ENCODE measurements at regions of chr1 and their contacts with region 1.

Region 1: GRCh38 chr1:113928941-113929749 is at the start of gene HIPK1:
- DNase-seq: peak; percentile 96

Region 2: GRCh38 chr1:113811888-113812660 is 117.1 kb before region 1 on chr1 and contains the start of gene RSBN1:
- CTCF ChIA-PET with region 1: no interaction called
- POLR2A ChIA-PET with region 1: interaction called, 17 read pairs
- DNase-seq: peak; percentile 96

Region 3: DNA sequence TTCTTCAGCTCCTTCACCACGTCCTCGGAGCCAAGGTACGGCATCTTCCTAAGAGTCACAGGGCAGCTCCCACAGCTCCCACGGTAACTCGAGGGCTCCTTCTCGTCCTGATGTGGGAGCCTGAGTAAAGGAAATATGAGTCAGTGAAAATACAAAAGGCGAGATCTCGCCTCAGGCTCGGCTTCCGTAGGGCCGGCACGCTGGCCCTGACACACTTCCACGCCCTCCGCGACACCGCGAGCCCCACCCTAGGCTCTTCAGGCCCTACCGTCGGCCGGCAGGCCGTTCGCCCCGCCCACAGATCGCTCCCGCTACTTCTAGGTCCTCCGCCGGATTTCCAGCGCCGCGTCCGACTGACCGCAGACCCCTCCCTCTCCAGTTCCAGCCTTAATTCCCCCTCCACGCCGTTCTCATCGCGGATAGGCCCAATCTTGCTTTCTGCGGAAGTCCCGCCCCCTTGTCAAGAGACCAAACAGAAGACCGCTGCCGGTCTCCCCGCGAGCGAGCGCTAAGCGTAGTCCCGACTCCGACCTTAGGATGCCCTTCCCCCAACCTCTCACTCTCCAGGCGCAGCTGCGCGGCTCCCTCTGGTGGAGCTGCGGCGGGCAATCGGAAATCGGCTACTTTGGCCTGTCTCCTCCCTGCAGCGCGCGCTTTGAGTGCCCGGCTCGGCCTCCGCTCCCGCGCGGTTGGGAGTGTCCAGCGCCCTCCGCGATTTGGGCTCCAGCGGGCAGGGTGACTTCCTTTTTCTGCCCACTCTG is 24.3 kb before region 1 on chr1 and contains the starts of genes AP4B1 and DCLRE1B:
- CTCF ChIA-PET with region 1: interaction called, 4 read pairs
- POLR2A ChIA-PET with region 1: interaction called, 116 read pairs
- DNase-seq: peak; percentile 100

Region 4: DNA sequence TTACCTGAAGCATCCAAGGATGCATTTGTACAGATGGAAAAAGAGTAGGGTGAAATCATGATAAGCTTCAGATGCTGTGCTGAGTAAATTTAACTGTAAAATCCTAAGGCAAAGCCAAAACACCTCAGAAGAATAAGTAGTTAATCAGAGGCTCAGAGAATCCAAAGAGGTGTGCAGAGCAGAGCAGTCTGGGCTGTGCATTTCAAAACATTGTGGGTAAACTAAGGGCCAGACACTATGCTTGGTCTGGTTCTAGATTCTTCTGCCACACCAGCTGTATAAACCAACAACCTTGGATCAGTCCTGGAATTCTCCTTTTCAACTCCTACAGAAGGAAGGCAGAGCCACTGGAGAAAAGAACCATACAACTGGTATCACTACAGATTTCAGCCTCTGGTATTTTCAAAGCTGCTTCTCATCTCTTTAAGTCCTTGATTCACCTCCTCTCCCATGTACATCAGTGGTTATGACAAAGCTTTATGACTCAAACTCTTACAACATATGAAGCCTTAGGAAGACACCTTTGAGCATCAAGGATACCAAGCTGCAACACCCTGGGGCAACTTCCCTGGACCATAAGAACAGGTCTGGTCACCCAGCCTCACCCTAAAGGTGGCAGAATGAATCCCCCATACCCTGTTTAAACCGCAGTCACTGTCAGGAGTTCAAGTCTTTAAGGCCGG is 11.6 kb before region 1 on chr1:
- CTCF ChIA-PET with region 1: interaction called, 3 read pairs
- POLR2A ChIA-PET with region 1: interaction called, 15 read pairs
- DNase-seq: no peak

Region 5: GRCh38 chr1:113946678-113947387 is 17.7 kb after region 1 on chr1:
- CTCF ChIA-PET with region 1: interaction called, 6 read pairs
- POLR2A ChIA-PET with region 1: interaction called, 12 read pairs
- DNase-seq: no peak

Region 6: DNA sequence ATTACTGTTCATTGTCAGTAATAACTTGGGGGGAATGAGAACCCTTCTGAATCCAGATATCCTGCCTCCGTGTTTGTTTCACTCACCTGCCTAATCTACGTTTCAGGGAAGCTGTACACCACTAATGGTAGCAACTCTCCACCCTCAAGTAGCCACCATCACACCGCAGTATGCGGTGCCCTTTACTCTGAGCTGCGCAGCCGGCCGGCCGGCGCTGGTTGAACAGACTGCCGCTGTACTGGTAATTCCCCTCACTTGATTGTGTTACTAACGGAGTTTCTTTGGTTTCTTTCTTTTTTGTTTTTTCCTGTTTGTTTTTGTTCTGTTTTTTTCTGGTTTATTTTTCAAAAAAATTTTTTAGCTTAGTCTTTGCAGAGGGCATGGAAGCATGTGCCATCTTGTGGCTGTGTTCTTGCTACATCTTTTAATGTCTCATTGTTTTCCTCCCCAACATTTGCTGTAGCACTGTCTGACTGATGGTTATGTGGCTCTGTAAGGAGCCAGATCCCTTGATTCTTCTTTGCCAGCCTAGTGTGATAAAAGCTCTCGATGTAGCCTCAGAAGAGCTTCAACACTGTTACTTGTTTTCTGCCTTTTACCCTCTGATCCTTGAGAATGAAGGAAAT is 34.2 kb after region 1 on chr1:
- CTCF ChIA-PET with region 1: no interaction called
- POLR2A ChIA-PET with region 1: interaction called, 10 read pairs
- DNase-seq: no peak

Region 7: DNA sequence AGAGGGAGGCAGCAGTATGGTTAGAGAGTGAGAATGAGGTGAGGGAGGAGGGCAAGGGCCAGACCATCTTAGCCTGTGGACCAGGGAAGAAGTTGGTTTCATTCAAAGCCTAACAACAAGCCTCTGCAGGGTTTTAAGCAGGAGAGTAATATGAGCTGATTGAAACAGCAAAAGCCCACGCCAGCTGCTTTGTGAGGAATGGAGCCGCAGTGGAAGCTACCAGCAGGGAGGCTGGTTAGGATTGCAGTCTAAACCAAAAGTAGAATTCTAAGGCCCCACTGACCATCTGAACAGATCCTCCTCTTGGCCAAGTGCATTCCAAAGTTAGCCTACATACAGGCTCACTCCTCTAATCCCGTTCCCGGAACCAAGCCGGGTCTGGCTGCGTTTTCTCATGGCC is 94.9 kb after region 1 on chr1:
- CTCF ChIA-PET with region 1: no interaction called
- POLR2A ChIA-PET with region 1: no interaction called
- DNase-seq: peak; percentile 52